ENCODE measurements at regions of chr3 and their contacts with region 1.

Region 1: DNA sequence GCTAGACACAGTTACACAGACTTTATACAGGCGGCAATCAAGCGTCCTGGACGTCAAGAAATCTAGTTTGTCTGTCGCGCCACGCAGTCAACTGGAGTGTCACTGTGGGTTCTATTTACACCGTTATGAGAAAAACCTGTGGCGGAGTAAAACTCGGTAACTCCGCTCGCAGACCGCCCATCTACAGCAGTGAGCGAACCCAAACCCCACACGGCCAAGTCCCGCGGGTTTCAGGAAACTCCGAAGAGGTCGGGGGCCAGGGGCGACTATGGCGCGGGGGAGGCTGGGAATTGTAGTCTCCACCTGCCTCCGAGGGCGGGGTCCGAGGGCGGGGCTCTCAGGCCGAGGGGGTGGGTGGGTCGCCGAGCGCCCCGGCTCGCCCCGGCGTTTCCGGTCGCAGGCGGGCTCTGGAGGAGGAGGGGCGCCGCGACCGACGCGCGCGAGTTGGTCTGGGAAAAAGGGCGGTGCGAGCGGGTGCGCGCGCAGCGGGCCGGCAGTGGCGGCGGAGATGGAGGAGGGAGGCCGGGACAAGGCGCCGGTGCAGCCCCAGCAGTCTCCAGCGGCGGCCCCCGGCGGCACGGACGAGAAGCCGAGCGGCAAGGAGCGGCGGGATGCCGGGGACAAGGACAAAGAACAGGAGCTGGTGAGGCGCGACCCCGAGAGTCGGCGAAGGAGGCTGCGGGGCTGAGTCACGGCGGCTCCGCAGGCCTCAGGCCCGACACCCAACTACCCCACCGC is at the start of gene PSMD2:
- DNase-seq: peak; percentile 94 to 99 (median 98)
- ATAC-seq: peak; percentile 93
- H3K4me3 ChIP-seq: peak within 1 kb of the TSS; percentile 95
- H3K4me3 Mint-ChIP-seq: peak within 1 kb of the TSS; percentile 96
- H3K27ac ChIP-seq: peak within 1 kb of the TSS; percentile 60 to 86
- H3K27ac Mint-ChIP-seq: peak within 1 kb of the TSS; percentile 91
- H3K4me1 ChIP-seq: peaks cover 24% of the 10 kb centered on the region
- H3K4me1 Mint-ChIP-seq: peaks cover 26% of the 10 kb centered on the region
- H3K27me3 ChIP-seq: no peaks in the 10 kb centered on the region
- H3K27me3 Mint-ChIP-seq: no peaks in the 10 kb centered on the region
- CTCF ChIP-seq: no peak
- total RNA-seq, gene PSMD2: 159 TPM

Region 2: DNA sequence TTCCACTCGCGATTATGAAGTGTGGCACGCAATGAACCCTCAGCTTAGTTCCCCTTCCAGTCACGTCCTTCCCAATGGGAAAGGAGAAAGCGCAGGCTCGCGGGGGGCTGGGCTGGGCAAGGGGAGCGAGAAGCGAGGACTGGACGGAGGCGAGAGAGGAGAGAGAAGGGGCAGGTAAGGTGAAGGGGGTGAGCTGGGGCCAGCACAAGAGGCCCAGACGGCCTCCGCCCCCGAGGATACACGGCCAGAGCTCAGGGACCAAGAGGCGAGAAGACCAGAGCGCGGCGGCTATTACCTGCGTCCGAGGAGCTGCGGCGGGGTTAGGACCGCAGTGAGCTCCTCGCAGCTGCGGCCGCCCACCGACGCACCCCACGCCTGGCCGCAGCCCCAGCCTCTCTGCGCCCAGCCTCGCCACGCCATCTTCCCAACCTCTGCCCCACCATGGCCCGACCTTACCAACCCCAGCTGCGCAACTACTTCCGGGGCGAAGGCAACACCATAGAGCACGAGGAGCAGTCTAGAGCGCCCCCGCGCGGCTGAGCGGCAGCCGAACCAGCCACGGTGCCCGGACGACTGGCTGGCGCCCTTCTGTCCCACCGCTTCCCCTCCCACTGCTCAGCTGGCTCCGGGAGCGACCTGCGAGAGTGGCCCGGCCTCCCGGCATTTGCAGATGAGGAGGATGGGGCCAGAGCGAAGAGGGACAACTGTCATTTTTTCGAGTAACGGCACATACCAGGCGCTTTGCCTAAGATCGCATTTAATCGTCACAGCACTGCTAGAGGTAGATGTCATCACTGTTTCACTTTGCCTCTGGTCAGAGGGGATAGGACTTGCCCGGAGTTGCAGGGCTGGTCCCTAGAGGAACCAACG is 414.3 kb before region 1 on chr3 and contains the start of gene PARL:
- CTCF ChIA-PET with region 1: interaction called, 3 read pairs
- POLR2A ChIA-PET with region 1: no interaction called
- intact Hi-C with region 1: loop called in 1 of 2 experiments (anchors 5 kb)
- DNase-seq: peak; percentile 93 to 98 (median 96)
- ATAC-seq: peak; percentile 100
- H3K4me3 ChIP-seq: peak within 1 kb of the TSS; percentile 97
- H3K4me3 Mint-ChIP-seq: peak within 1 kb of the TSS; percentile 97
- H3K27ac ChIP-seq: peak within 1 kb of the TSS; percentile 66
- H3K27ac Mint-ChIP-seq: peak within 1 kb of the TSS; percentile 82
- H3K4me1 ChIP-seq: peaks cover 37% of the 10 kb centered on the region
- H3K4me1 Mint-ChIP-seq: peaks cover 36% of the 10 kb centered on the region
- H3K27me3 ChIP-seq: no peaks in the 10 kb centered on the region
- H3K27me3 Mint-ChIP-seq: no peaks in the 10 kb centered on the region
- CTCF ChIP-seq: peak; percentile 91
- total RNA-seq, gene PARL: 36.9 to 40.0 TPM

Region 3: DNA sequence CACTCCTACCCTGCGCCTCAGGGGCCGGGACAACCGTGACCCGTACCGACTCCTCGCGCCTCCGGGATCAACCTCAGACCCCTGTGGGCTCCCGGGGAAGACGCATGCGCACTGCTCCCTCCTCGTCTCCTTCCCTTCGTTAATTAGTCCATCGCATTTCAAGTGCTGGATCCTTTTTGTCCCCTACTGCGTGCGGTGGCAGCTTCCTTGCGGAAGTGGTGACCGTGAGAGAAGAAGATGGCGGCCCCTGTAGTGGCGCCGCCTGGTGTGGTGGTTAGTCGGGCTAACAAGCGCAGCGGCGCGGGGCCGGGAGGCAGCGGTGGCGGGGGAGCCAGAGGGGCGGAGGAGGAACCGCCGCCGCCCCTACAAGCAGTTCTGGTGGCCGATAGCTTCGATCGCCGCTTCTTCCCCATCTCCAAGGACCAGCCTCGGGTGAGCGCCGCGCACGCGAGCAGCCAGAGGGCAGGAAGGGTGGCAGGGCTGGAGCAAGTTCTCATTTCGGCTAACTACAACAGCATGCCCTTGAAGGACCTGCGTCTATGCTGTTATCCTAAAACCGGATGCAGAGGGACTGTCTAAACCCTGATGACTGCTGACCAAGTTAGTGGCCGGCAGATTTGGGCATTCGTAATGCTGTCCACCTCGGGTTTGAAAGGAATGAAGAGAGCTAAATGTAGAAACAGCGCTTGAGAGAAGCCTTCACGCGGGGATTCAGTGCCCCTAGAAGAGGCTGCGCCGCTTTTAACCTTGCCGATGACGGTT is 163.6 kb before region 1 on chr3 and contains the start of gene EIF2B5:
- CTCF ChIA-PET with region 1: no interaction called
- POLR2A ChIA-PET with region 1: no interaction called
- intact Hi-C with region 1: loop called in 1 of 2 experiments (anchors 5 kb)
- DNase-seq: peak; percentile 72 to 95 (median 82)
- ATAC-seq: peak; percentile 88
- H3K4me3 ChIP-seq: peak within 1 kb of the TSS; percentile 99
- H3K4me3 Mint-ChIP-seq: peak within 1 kb of the TSS; percentile 99
- H3K27ac ChIP-seq: peak within 1 kb of the TSS; percentile 71 to 76
- H3K27ac Mint-ChIP-seq: peak within 1 kb of the TSS; percentile 97
- H3K4me1 ChIP-seq: peaks cover 29% of the 10 kb centered on the region
- H3K4me1 Mint-ChIP-seq: peaks cover 50% of the 10 kb centered on the region
- H3K27me3 ChIP-seq: no peaks in the 10 kb centered on the region
- H3K27me3 Mint-ChIP-seq: no peaks in the 10 kb centered on the region
- CTCF ChIP-seq: peak; percentile 31
- total RNA-seq, gene EIF2B5: 53.6 TPM

Region 4: GRCh38 chr3:184185461-184186308 is 113.2 kb before region 1 on chr3 and contains the start of gene ABCF3:
- CTCF ChIA-PET with region 1: no interaction called
- POLR2A ChIA-PET with region 1: no interaction called
- intact Hi-C with region 1: loop called in 1 of 2 experiments (anchors 1 kb)
- DNase-seq: peak; percentile 98 to 100 (median 99)
- ATAC-seq: peak; percentile 95
- H3K4me3 ChIP-seq: peak within 1 kb of the TSS; percentile 81
- H3K4me3 Mint-ChIP-seq: peak within 1 kb of the TSS; percentile 99
- H3K27ac ChIP-seq: peak within 1 kb of the TSS; percentile 15 to 69
- H3K27ac Mint-ChIP-seq: peak within 1 kb of the TSS; percentile 87
- H3K4me1 ChIP-seq: peaks cover 32% of the 10 kb centered on the region
- H3K4me1 Mint-ChIP-seq: peaks cover 47% of the 10 kb centered on the region
- H3K27me3 ChIP-seq: no peaks in the 10 kb centered on the region
- H3K27me3 Mint-ChIP-seq: no peaks in the 10 kb centered on the region
- CTCF ChIP-seq: no peak
- total RNA-seq, gene ABCF3: 163 to 166 TPM

Region 5: GRCh38 chr3:184261270-184261853 is 37.6 kb before region 1 on chr3 and contains the start of gene CAMK2N2:
- CTCF ChIA-PET with region 1: no interaction called
- POLR2A ChIA-PET with region 1: no interaction called
- intact Hi-C with region 1: loop called in 1 of 2 experiments (anchors 5 kb)
- DNase-seq: peak in 10 of 14 experiments; percentile 15 to 79 (median 55)
- ATAC-seq: peak; percentile 48
- H3K4me3 ChIP-seq: peak within 1 kb of the TSS; percentile 60
- H3K4me3 Mint-ChIP-seq: peak within 1 kb of the TSS; percentile 84
- H3K27ac ChIP-seq: no peak within 1 kb of the TSS
- H3K27ac Mint-ChIP-seq: no peak within 1 kb of the TSS
- H3K4me1 ChIP-seq: peaks cover 29% of the 10 kb centered on the region
- H3K4me1 Mint-ChIP-seq: peaks cover 17% of the 10 kb centered on the region
- H3K27me3 ChIP-seq: peaks cover 37% of the 10 kb centered on the region in 2 experiments
- H3K27me3 Mint-ChIP-seq: peaks cover 53% of the 10 kb centered on the region
- CTCF ChIP-seq: no peak
- total RNA-seq, gene CAMK2N2: not detected

Region 6: GRCh38 chr3:184362668-184363540 is 64.0 kb after region 1 on chr3:
- CTCF ChIA-PET with region 1: interaction called, 3 read pairs
- POLR2A ChIA-PET with region 1: no interaction called
- intact Hi-C with region 1: loop called in 1 of 2 experiments (anchors 2 kb)
- DNase-seq: peak; percentile 81 to 98 (median 90)
- ATAC-seq: peak; percentile 72
- H3K4me3 ChIP-seq: peak overlapping the region; percentile 94
- H3K4me3 Mint-ChIP-seq: peak overlapping the region; percentile 100
- H3K27ac ChIP-seq: peak overlapping the region; percentile 71 to 80
- H3K27ac Mint-ChIP-seq: peak overlapping the region; percentile 97
- H3K4me1 ChIP-seq: peaks cover 37% of the 10 kb centered on the region
- H3K4me1 Mint-ChIP-seq: peaks cover 26% of the 10 kb centered on the region
- H3K27me3 ChIP-seq: no peaks in the 10 kb centered on the region
- H3K27me3 Mint-ChIP-seq: no peaks in the 10 kb centered on the region
- CTCF ChIP-seq: peak; percentile 48

Measured in CD4-positive, alpha-beta T cell (primary cell).